MCF 10A (cell line): ENCODE measurements at regions of chr3 and their contacts with region 1.

Region 1: GRCh38 chr3:59857589-59858346 is 807.9 kb upstream of the CFAP20DC start:
- DNase-seq: peak; percentile 86
- H3K4me3 Mint-ChIP-seq: no peak overlapping the region
- H3K27ac Mint-ChIP-seq: no peak overlapping the region
- H3K4me1 Mint-ChIP-seq: peaks cover 10% of the 10 kb centered on the region
- H3K27me3 Mint-ChIP-seq: no peaks in the 10 kb centered on the region
- CTCF ChIP-seq: peak; percentile 75

Region 2: DNA sequence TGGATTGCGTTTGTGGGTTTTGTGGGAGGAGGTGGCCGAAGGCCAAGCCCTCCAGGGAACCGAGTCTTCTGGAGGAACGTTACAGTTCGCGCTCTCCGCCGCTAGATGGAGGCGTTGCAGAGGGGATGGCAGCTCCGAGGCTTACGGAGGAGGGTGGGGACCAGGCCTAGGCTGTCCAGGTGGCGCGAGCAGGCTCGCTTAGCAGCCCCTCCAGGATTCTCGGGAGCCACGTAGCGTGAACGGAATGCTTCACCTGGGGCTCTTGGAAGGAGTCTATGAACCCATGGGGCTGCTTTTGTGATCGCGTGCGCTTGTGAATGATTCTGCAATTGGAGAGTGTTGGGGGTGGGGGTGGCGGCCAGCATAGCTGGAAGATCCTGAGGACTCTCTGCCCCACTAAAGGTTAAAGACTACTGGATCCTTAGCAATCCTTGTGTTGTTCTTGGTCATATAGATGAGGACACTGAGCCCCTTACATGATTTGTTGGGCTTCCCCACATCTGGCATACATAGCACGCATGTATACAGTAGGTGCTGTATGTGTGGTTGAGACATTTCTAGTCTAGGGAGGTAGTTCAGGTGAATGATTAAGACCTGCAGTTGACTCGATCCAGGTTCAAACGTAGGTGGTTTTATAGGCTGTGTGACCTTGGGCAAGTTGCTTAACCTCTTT is 1216.9 kb before region 1 on chr3:
- CTCF ChIA-PET with region 1: interaction called, 3 read pairs
- POLR2A ChIA-PET with region 1: no interaction called
- intact Hi-C with region 1: loop called (anchors 2 kb)
- DNase-seq: peak; percentile 83
- H3K4me3 Mint-ChIP-seq: no peak overlapping the region
- H3K27ac Mint-ChIP-seq: no peak overlapping the region
- H3K4me1 Mint-ChIP-seq: peaks cover under 1% of the 10 kb centered on the region
- H3K27me3 Mint-ChIP-seq: no peaks in the 10 kb centered on the region
- CTCF ChIP-seq: peak; percentile 93

Region 3: GRCh38 chr3:59212128-59212779 is 645.5 kb before region 1 on chr3:
- CTCF ChIA-PET with region 1: interaction called, 30 read pairs
- POLR2A ChIA-PET with region 1: no interaction called
- intact Hi-C with region 1: loop called (anchors 1 kb)
- DNase-seq: peak; percentile 50
- H3K4me3 Mint-ChIP-seq: no peak overlapping the region
- H3K27ac Mint-ChIP-seq: no peak overlapping the region
- H3K4me1 Mint-ChIP-seq: peaks cover 5% of the 10 kb centered on the region
- H3K27me3 Mint-ChIP-seq: no peaks in the 10 kb centered on the region
- CTCF ChIP-seq: peak; percentile 70

Region 4: DNA sequence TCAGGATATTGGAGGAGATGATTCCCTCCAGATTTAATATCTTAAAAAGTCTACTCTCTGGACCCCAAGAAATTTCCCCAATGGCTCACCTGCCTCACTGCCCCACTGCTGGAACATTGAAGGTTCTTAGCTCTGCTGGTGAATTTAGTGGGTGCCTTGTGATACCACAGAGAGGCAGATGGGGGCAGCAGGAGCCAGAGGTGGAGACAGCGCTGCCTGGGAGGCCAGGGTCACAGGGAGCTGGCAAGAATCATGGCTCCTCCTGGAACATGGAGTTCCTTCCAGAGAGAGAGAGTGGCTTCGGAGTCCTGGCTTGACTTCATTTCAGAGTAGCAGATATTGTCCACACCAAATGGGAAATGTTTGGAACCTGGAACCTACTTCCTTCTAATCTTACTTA is 544.4 kb before region 1 on chr3:
- CTCF ChIA-PET with region 1: interaction called, 6 read pairs
- POLR2A ChIA-PET with region 1: no interaction called
- intact Hi-C with region 1: loop called (anchors 1 kb)
- DNase-seq: peak; percentile 70
- H3K4me3 Mint-ChIP-seq: no peak overlapping the region
- H3K27ac Mint-ChIP-seq: peak overlapping the region; percentile 29
- H3K4me1 Mint-ChIP-seq: peaks cover 5% of the 10 kb centered on the region
- H3K27me3 Mint-ChIP-seq: no peaks in the 10 kb centered on the region
- CTCF ChIP-seq: peak; percentile 86

Region 5: DNA sequence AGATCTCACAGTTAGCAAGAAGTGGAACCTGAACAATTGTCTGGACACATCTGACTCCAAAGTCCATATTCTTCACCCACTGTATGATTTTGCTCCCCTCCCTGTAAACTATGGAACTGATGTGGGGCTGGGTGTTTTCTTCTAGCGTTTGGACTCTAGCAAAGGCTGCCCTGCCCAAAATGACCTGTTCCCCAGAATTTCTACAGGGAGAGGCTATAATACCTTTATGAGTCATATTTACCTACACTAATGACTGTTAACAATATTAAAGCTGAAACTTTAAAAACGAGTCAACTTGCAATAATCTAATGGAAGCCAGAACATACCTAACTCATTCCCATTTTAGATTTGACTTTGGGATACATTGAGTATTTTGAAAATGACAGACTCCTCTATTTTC is 276.8 kb before region 1 on chr3:
- CTCF ChIA-PET with region 1: interaction called, 124 read pairs
- POLR2A ChIA-PET with region 1: interaction called, 3 read pairs
- intact Hi-C with region 1: no loop called
- DNase-seq: no peak
- H3K4me3 Mint-ChIP-seq: no peak overlapping the region
- H3K27ac Mint-ChIP-seq: no peak overlapping the region
- H3K4me1 Mint-ChIP-seq: peaks cover 14% of the 10 kb centered on the region
- H3K27me3 Mint-ChIP-seq: no peaks in the 10 kb centered on the region
- CTCF ChIP-seq: no peak

Region 6: DNA sequence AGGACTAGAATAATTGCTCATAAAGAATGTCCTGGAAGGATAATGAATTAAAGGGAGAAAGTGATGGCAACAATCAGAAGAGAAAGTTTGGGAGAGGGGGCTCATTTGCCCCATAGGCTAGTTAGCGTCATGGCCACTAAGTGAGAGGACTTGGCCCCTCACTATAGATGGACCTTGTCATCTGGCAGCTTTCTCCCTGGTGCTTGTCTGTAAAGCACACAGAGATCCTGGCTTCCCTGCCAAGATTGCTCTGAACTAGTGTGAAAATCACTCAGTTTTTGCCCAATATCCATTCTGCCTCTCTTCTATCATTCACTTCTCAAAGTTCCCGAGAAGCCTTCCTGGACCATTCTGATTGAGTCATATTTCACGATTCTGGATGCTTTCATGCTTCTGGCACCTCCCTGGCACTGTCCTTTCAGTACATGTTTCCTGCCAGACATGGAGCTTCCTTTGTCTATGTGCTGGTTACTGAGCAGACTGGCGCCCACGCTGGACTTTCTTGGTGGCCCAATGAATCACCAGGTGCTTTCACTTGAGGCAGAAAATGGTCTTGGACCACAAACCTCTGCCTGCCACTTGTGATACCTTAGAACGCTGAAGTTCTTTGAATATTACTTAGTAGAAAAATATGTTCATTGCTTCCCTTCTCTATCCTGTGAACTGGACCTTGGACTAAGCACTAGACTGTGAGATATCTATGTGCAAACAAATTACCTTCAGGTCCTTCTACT is 98.3 kb before region 1 on chr3:
- CTCF ChIA-PET with region 1: no interaction called
- POLR2A ChIA-PET with region 1: no interaction called
- intact Hi-C with region 1: no loop called
- DNase-seq: peak; percentile 32
- H3K4me3 Mint-ChIP-seq: no peak overlapping the region
- H3K27ac Mint-ChIP-seq: no peak overlapping the region
- H3K4me1 Mint-ChIP-seq: no peaks in the 10 kb centered on the region
- H3K27me3 Mint-ChIP-seq: no peaks in the 10 kb centered on the region
- CTCF ChIP-seq: no peak

Region 7: GRCh38 chr3:59809710-59810444 is 47.9 kb before region 1 on chr3:
- CTCF ChIA-PET with region 1: interaction called, 33 read pairs
- POLR2A ChIA-PET with region 1: no interaction called
- intact Hi-C with region 1: loop called (anchors 1 kb)
- DNase-seq: peak; percentile 33
- H3K4me3 Mint-ChIP-seq: no peak overlapping the region
- H3K27ac Mint-ChIP-seq: peak overlapping the region; percentile 63
- H3K4me1 Mint-ChIP-seq: no peaks in the 10 kb centered on the region
- H3K27me3 Mint-ChIP-seq: no peaks in the 10 kb centered on the region
- CTCF ChIP-seq: peak; percentile 45

Region 8: DNA sequence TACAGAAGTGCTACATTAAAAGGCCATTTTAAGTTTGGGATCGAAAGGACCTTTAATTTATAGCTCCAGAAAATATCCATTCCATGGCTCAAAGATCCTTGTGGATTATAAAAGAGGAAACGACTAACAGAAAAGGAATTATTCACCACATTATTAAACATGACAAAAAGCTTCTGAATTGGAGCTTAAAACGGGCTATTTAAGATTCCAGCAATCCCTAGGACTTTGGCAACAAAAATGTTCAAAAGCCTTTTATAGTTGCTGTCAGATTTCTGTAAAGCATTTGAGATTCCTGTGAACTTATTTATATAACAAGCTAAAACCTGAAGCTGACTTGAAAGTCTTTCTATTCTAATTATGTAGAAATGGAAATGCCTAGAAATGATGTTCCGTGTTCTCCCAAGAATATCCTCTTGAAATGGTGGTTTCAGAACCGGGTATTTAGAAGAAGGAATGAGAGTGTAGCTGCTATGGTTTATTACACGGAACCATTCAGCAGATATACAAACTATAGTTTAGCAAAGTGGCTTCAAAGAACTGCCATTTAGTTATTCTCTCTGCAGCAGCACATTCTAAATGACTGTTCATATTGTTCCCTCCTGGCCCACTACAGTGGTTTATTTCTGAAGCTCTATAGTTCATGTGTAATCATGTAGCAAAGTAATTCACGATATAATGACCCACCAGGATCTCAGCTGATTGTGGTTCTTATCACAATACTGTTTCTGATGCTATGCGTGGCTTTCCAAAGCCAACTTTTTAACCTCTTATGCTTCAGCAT is 431.8 kb after region 1 on chr3:
- CTCF ChIA-PET with region 1: no interaction called
- POLR2A ChIA-PET with region 1: no interaction called
- intact Hi-C with region 1: no loop called
- DNase-seq: no peak
- H3K4me3 Mint-ChIP-seq: no peak overlapping the region
- H3K27ac Mint-ChIP-seq: no peak overlapping the region
- H3K4me1 Mint-ChIP-seq: peaks cover 7% of the 10 kb centered on the region
- H3K27me3 Mint-ChIP-seq: no peaks in the 10 kb centered on the region
- CTCF ChIP-seq: no peak

Region 9: GRCh38 chr3:61052855-61053254 is 1195.1 kb after region 1 on chr3:
- CTCF ChIA-PET with region 1: no interaction called
- POLR2A ChIA-PET with region 1: no interaction called
- intact Hi-C with region 1: no loop called
- DNase-seq: no peak
- H3K4me3 Mint-ChIP-seq: no peak overlapping the region
- H3K27ac Mint-ChIP-seq: no peak overlapping the region
- H3K4me1 Mint-ChIP-seq: no peaks in the 10 kb centered on the region
- H3K27me3 Mint-ChIP-seq: no peaks in the 10 kb centered on the region
- CTCF ChIP-seq: no peak